Caco-2 (cell line): ENCODE measurements at regions of chr6 and their contacts with region 1.

Region 1: DNA sequence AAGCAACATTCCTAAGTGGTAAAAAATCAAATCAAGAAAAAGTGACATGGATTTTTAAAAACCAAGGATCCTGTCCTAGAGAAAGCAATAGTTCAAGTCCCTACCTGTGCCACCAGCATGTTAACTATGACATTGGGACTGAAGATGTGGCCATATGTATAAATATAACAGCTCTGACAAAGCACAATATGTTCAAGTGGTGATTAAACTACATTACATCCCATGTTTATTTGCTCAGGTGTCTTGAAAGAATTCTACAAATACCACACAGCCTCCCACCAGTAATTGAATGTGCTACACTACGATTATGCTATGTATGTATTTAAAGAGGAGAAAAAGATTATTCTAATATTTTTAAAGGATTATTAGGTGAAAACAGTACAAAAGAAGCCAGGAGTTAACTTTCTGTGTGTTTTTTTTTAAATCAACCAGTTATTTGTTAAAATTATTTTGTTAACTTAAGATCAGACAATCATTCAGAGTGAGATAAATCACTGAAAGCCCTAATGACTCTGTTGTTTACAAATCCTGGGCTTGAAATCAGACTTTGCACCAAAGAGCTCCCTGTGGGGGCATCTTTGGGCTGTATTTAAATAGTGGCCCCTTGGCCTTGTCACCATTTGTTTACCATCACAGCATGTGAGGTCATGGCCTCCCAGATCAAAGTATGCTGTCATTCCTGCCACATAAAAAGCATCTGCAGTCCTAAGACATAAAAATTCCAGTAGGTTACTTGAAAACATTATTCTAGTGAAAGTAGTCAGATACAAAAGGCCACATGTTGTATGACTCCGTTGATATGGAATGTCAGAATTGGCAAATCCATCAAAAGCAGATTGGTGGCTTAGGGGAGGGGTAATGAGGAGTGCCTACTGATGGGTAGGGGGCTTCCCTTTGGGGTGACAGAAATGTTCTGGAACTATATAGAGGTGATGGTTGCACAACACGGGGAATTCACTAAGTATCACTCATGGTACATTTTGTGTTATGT is 17.1 kb downstream of the TTLL2 start:
- DNase-seq: peak; percentile 89 to 93
- H3K4me3 ChIP-seq: no peak overlapping the region
- H3K4me3 Mint-ChIP-seq: peak overlapping the region; percentile 51
- H3K27ac Mint-ChIP-seq: peak overlapping the region; percentile 93
- H3K4me1 ChIP-seq: peaks cover 33% of the 10 kb centered on the region
- H3K4me1 Mint-ChIP-seq: peaks cover 56% of the 10 kb centered on the region
- H3K27me3 ChIP-seq: no peaks in the 10 kb centered on the region
- H3K27me3 Mint-ChIP-seq: no peaks in the 10 kb centered on the region
- CTCF ChIP-seq: no peak

Region 2: GRCh38 chr6:167227984-167228383 is 114.0 kb before region 1 on chr6:
- CTCF ChIA-PET with region 1: no interaction called
- POLR2A ChIA-PET with region 1: no interaction called
- intact Hi-C with region 1: no loop called
- DNase-seq: no peak
- H3K4me3 ChIP-seq: no peak overlapping the region
- H3K4me3 Mint-ChIP-seq: no peak overlapping the region
- H3K27ac Mint-ChIP-seq: no peak overlapping the region
- H3K4me1 ChIP-seq: peaks cover 40% of the 10 kb centered on the region
- H3K4me1 Mint-ChIP-seq: peaks cover 46% of the 10 kb centered on the region
- H3K27me3 ChIP-seq: no peaks in the 10 kb centered on the region
- H3K27me3 Mint-ChIP-seq: no peaks in the 10 kb centered on the region
- CTCF ChIP-seq: no peak

Region 3: DNA sequence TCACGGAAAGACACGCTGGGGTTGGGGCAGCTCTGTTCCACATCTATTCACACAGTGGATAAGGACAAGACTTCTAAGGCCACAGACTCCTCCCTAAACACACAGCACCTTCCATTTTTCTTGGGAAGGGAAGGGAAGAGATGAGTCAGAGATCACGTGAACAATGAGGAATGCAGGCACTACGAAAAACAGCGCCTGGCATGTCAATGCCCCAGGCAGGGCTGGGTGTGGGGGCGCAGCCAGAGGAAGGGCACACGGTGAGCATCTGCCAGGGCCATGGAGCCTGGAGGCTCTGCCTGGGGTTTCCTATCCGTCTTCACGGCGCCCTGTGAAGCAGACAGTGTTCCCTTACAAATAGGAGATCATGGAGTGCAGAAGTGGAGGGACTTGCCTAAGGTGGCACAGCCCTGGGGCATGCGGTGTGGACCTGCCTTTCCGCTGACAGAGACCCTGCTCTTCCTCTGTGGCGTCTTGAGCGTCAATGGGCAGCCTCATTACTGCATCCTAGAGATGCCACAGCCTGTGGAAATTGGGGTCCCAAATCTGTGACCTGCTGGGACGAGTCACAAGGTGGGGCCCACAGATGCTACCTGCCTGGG is 35.5 kb before region 1 on chr6:
- CTCF ChIA-PET with region 1: interaction called, 8 read pairs
- POLR2A ChIA-PET with region 1: interaction called, 5 read pairs
- intact Hi-C with region 1: loop called (anchors 1 kb)
- DNase-seq: no peak
- H3K4me3 ChIP-seq: no peak overlapping the region
- H3K4me3 Mint-ChIP-seq: peak overlapping the region; percentile 16
- H3K27ac Mint-ChIP-seq: peak overlapping the region; percentile 80
- H3K4me1 ChIP-seq: peaks cover 37% of the 10 kb centered on the region
- H3K4me1 Mint-ChIP-seq: peaks cover 41% of the 10 kb centered on the region
- H3K27me3 ChIP-seq: no peaks in the 10 kb centered on the region
- H3K27me3 Mint-ChIP-seq: no peaks in the 10 kb centered on the region
- CTCF ChIP-seq: no peak

Region 4: GRCh38 chr6:167314180-167314821 is 27.7 kb before region 1 on chr6:
- CTCF ChIA-PET with region 1: interaction called, 8 read pairs
- POLR2A ChIA-PET with region 1: interaction called, 5 read pairs
- intact Hi-C with region 1: loop called (anchors 1 kb)
- DNase-seq: no peak
- H3K4me3 ChIP-seq: no peak overlapping the region
- H3K4me3 Mint-ChIP-seq: no peak overlapping the region
- H3K27ac Mint-ChIP-seq: peak overlapping the region; percentile 20
- H3K4me1 ChIP-seq: peaks cover 27% of the 10 kb centered on the region
- H3K4me1 Mint-ChIP-seq: peaks cover 42% of the 10 kb centered on the region
- H3K27me3 ChIP-seq: no peaks in the 10 kb centered on the region
- H3K27me3 Mint-ChIP-seq: no peaks in the 10 kb centered on the region
- CTCF ChIP-seq: no peak

Region 5: DNA sequence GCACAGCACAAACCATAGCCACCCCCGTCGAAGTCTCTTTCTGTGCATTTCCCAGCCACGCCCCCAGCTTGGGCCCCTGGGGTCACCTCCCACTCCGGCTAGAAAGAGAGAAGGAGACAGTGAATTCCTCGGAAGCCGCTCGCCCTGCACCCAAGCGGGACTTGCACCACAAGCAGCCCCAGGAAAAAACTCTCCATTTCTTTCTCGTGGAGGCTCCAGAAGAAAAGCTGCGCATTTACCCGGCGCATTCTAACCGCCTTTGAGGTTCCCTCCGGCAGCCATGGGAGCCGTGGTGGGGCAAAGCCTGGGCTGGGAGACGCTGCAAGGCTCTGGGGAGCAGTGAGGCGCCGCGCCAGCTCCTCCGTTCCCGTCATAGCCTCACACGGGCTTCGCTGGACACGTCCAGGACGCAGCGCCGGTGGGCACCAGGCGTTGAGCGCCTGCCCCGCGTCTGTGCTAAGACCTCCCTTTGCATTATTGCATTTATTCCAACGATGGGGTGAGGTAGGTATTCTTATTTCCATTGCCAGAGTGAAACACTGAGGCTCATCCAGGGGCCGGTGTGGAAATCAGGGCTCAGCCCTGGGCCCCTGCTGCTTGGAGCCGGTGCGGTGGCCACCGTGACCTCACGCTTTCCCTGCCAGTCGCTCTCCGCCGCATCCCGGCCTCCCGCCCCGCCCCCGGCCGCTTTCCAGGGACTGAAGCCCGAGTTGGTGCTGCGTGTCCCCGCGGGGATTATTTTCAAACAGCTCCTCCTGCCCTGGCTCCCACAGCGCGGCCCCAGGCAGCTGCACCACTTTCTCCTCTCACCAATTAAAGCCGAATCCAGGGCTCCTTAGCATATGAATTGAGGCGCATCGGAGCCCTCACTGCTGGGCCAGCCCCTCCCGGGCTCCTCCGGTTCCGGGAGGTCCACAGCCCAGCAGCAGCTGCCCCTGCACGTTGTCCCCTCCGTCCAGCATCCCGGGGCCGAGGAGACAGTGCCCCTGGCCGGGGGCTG is 336.4 kb after region 1 on chr6:
- CTCF ChIA-PET with region 1: no interaction called
- POLR2A ChIA-PET with region 1: no interaction called
- intact Hi-C with region 1: no loop called
- DNase-seq: peak; percentile 73 to 77
- H3K4me3 ChIP-seq: peak overlapping the region; percentile 60
- H3K4me3 Mint-ChIP-seq: peak overlapping the region; percentile 87
- H3K27ac Mint-ChIP-seq: peak overlapping the region; percentile 86
- H3K4me1 ChIP-seq: peaks cover 81% of the 10 kb centered on the region
- H3K4me1 Mint-ChIP-seq: peaks cover 44% of the 10 kb centered on the region
- H3K27me3 ChIP-seq: no peaks in the 10 kb centered on the region
- H3K27me3 Mint-ChIP-seq: no peaks in the 10 kb centered on the region
- CTCF ChIP-seq: no peak